Caco-2 (cell line): ENCODE measurements at regions of chr3 and their contacts with region 1.

Region 1: GRCh38 chr3:187319699-187320302 is 28.3 kb upstream of the MASP1 start:
- DNase-seq: peak; percentile 66 to 72
- H3K4me3 ChIP-seq: no peak overlapping the region
- H3K4me3 Mint-ChIP-seq: no peak overlapping the region
- H3K27ac Mint-ChIP-seq: no peak overlapping the region
- H3K4me1 ChIP-seq: peaks cover 27% of the 10 kb centered on the region
- H3K4me1 Mint-ChIP-seq: no peaks in the 10 kb centered on the region
- H3K27me3 ChIP-seq: no peaks in the 10 kb centered on the region
- H3K27me3 Mint-ChIP-seq: peaks cover 10% of the 10 kb centered on the region
- CTCF ChIP-seq: peak; percentile 82 to 89

Region 2: GRCh38 chr3:186888569-186888968 is 431.2 kb before region 1 on chr3:
- CTCF ChIA-PET with region 1: no interaction called
- POLR2A ChIA-PET with region 1: no interaction called
- intact Hi-C with region 1: no loop called
- DNase-seq: no peak
- H3K4me3 ChIP-seq: no peak overlapping the region
- H3K4me3 Mint-ChIP-seq: no peak overlapping the region
- H3K27ac Mint-ChIP-seq: no peak overlapping the region
- H3K4me1 ChIP-seq: peaks cover 13% of the 10 kb centered on the region
- H3K4me1 Mint-ChIP-seq: peaks cover 8% of the 10 kb centered on the region
- H3K27me3 ChIP-seq: no peaks in the 10 kb centered on the region
- H3K27me3 Mint-ChIP-seq: no peaks in the 10 kb centered on the region
- CTCF ChIP-seq: no peak

Region 3: GRCh38 chr3:187305881-187306280 is 13.9 kb before region 1 on chr3:
- CTCF ChIA-PET with region 1: no interaction called
- POLR2A ChIA-PET with region 1: no interaction called
- intact Hi-C with region 1: no loop called
- DNase-seq: no peak
- H3K4me3 ChIP-seq: no peak overlapping the region
- H3K4me3 Mint-ChIP-seq: no peak overlapping the region
- H3K27ac Mint-ChIP-seq: no peak overlapping the region
- H3K4me1 ChIP-seq: no peaks in the 10 kb centered on the region
- H3K4me1 Mint-ChIP-seq: peaks cover 7% of the 10 kb centered on the region
- H3K27me3 ChIP-seq: no peaks in the 10 kb centered on the region
- H3K27me3 Mint-ChIP-seq: peaks cover 22% of the 10 kb centered on the region
- CTCF ChIP-seq: no peak

Region 4: DNA sequence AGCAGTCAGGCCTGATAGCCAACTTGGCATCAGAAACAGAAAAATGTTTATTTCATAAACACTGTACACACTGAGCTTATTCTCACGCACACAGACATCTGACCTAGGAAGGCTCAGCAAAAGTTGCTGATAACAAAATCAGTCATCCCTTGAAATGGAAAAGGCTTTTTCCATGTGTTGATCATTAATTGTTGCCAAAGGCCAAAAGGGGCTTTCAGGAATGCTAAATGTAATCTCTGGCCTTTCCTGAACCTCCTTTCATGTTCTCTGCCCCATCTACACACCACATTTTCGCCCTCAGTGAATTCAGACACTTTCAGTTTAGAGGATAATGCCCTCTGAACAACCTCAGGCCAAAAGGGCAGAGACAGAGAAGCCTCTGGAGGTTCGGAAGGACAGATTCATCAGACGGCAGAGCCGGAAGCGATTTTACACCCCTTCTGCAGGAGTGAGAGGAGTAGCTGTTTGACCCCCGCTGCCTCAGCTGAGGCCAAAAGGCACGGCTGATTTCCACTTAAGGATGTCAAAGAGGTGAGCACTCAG is 62.9 kb after region 1 on chr3:
- CTCF ChIA-PET with region 1: no interaction called
- POLR2A ChIA-PET with region 1: no interaction called
- intact Hi-C with region 1: no loop called
- DNase-seq: peak in 1 of 2 experiments; percentile 3
- H3K4me3 ChIP-seq: no peak overlapping the region
- H3K4me3 Mint-ChIP-seq: no peak overlapping the region
- H3K27ac Mint-ChIP-seq: peak overlapping the region; percentile 71
- H3K4me1 ChIP-seq: peaks cover 36% of the 10 kb centered on the region
- H3K4me1 Mint-ChIP-seq: peaks cover 30% of the 10 kb centered on the region
- H3K27me3 ChIP-seq: no peaks in the 10 kb centered on the region
- H3K27me3 Mint-ChIP-seq: no peaks in the 10 kb centered on the region
- CTCF ChIP-seq: no peak

Region 5: DNA sequence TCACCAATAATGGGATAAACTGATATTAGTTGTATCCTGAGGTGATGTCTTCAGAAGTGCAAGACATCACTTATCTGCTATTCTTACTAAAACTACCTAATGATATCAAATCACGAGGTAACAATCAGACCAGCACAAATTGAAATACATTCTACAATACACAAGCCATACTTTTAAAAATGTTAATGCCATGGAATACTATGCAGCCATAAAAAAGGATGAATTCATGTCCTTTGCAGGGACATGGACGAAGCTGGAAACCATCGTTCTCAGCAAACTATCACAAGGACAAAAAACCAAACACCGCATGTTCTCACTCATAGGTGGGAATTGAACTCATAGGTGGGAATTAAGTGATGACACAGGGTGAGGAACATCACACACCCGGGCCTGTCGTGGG is 221.0 kb after region 1 on chr3:
- CTCF ChIA-PET with region 1: no interaction called
- POLR2A ChIA-PET with region 1: no interaction called
- intact Hi-C with region 1: loop called (anchors 1 kb)
- DNase-seq: no peak
- H3K4me3 ChIP-seq: no peak overlapping the region
- H3K4me3 Mint-ChIP-seq: no peak overlapping the region
- H3K27ac Mint-ChIP-seq: no peak overlapping the region
- H3K4me1 ChIP-seq: no peaks in the 10 kb centered on the region
- H3K4me1 Mint-ChIP-seq: no peaks in the 10 kb centered on the region
- H3K27me3 ChIP-seq: no peaks in the 10 kb centered on the region
- H3K27me3 Mint-ChIP-seq: peaks cover 3% of the 10 kb centered on the region
- CTCF ChIP-seq: no peak

Region 6: GRCh38 chr3:187616307-187616972 is 296.6 kb after region 1 on chr3:
- CTCF ChIA-PET with region 1: interaction called, 6 read pairs
- POLR2A ChIA-PET with region 1: no interaction called
- intact Hi-C with region 1: loop called (anchors 1 kb)
- DNase-seq: peak in 1 of 2 experiments; percentile 71
- H3K4me3 ChIP-seq: no peak overlapping the region
- H3K4me3 Mint-ChIP-seq: no peak overlapping the region
- H3K27ac Mint-ChIP-seq: no peak overlapping the region
- H3K4me1 ChIP-seq: no peaks in the 10 kb centered on the region
- H3K4me1 Mint-ChIP-seq: peaks cover 10% of the 10 kb centered on the region
- H3K27me3 ChIP-seq: no peaks in the 10 kb centered on the region
- H3K27me3 Mint-ChIP-seq: no peaks in the 10 kb centered on the region
- CTCF ChIP-seq: peak; percentile 76 to 82

Region 7: DNA sequence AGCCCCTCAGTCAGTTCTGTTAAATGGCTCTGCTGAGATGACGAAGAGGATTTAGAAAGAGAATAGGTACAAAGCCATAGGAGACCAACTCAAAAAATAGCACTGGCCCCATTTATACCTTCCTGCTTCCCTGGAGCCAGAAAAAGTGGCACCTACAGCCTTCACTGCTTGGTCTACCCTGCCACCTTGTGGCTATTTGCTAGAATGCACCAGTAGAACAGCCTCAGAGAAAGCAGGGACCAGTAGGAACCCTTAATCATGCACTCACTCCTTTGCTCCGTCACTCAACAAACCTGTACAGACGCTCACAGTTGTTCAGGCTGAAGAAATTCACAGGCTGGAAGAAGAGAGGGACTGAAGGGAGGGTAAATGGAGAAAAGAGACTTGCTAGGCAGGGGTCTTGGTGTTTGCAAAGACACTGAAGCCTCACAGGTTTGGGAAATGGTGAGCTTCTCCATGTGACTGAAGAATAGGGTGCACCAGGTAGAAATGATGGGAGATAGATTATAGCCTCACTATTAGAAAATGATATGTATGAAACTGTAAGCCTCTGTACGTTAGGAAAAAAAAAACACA is 394.7 kb after region 1 on chr3:
- CTCF ChIA-PET with region 1: interaction called, 5 read pairs
- POLR2A ChIA-PET with region 1: no interaction called
- intact Hi-C with region 1: loop called (anchors 1 kb)
- DNase-seq: peak; percentile 68 to 80
- H3K4me3 ChIP-seq: no peak overlapping the region
- H3K4me3 Mint-ChIP-seq: no peak overlapping the region
- H3K27ac Mint-ChIP-seq: no peak overlapping the region
- H3K4me1 ChIP-seq: peaks cover 1% of the 10 kb centered on the region; the same call in 1 of the 2 replicates
- H3K4me1 Mint-ChIP-seq: peaks cover 11% of the 10 kb centered on the region
- H3K27me3 ChIP-seq: no peaks in the 10 kb centered on the region
- H3K27me3 Mint-ChIP-seq: no peaks in the 10 kb centered on the region
- CTCF ChIP-seq: peak; percentile 84 to 90